HepG2 (cell line): ENCODE measurements at regions of chrX and their contacts with region 1.

Region 1: GRCh38 chrX:13734278-13735172 is at the starts of genes OFD1 and TRAPPC2:
- DNase-seq: peak; percentile 88
- ATAC-seq: peak; percentile 99
- H3K4me3 ChIP-seq: peak within 1 kb of the TSS; percentile 72 to 79 (median 79)
- H3K27ac ChIP-seq: peak within 1 kb of the TSS; percentile 88
- H3K4me1 ChIP-seq: peaks cover 15% of the 10 kb centered on the region
- H3K27me3 ChIP-seq: no peaks in the 10 kb centered on the region; a peak in 1 of 5 replicates
- CTCF ChIP-seq: 0 out of 2 replicates have a peak, but pooled peaks have one; percentile 17
- EP300 ChIP-seq: no peak; a peak in 1 of 4 replicates
- POLR2A ChIP-seq: peak; percentile 77 to 89
- RAD21 ChIP-seq: no peak
- total RNA-seq, gene OFD1: 14.3 and 16.4 TPM in 2 replicates
- total RNA-seq, gene TRAPPC2: 8.1 and 9.2 TPM in 2 replicates

Region 2: DNA sequence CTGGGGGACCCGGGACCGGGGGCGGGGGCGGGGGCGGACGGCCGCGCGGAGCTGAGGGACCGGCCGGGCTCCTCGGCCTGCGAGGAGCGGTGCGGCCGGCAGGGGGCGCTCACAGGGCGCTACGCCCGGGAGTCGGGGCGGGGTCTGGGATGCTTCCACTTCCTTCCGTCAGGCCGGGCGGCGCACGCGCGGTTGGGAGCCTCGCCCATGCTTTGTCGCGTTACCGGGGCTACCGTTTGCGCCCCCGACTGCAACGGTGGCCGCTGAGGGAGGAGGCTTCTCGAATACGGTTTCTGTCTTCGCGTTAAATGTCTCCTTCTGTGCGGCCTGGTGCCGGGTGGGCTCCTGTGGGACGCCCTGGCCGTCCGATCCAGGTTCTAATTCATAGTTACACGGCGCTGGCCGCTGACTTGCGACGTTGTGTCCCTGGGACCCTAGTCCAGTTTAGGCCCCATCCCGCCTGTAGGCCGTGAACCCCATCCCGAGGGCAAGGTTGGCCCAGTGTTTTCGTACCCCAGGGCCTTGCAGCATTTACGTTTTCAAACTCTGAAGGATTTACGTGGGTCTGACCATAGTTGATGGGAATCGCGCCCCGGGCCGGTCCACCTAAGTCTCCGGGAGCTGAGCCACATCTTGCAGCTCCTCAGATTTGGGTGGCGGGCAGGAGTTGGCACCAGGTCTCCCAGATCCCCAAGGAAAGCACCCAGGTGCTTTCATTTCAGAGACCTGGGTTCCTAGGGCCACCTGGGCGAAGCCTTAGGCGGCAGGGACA is 1975.9 kb before region 1 on chrX:
- CTCF ChIA-PET with region 1: no interaction called
- POLR2A ChIA-PET with region 1: no interaction called
- in situ Hi-C with region 1: no loop called
- intact Hi-C with region 1: no loop called
- DNase-seq: peak; percentile 60
- ATAC-seq: peak; percentile 76
- H3K4me3 ChIP-seq: peak overlapping the region; percentile 81 to 85 (median 85)
- H3K27ac ChIP-seq: peak overlapping the region; percentile 68
- H3K4me1 ChIP-seq: peaks cover 29% of the 10 kb centered on the region
- H3K27me3 ChIP-seq: peaks cover 2 to 13% of the 10 kb centered on the region in 2 experiments; a peak in 3 of 5 replicates
- CTCF ChIP-seq: peak; percentile 65
- EP300 ChIP-seq: no peak
- POLR2A ChIP-seq: no peak
- RAD21 ChIP-seq: no peak

Region 3: GRCh38 chrX:13653022-13653693 is 81.4 kb before region 1 on chrX and contains the start of gene TCEANC:
- CTCF ChIA-PET with region 1: no interaction called
- POLR2A ChIA-PET with region 1: interaction called, 11 read pairs
- in situ Hi-C with region 1: no loop called
- intact Hi-C with region 1: no loop called
- DNase-seq: peak; percentile 91
- ATAC-seq: peak; percentile 98
- H3K4me3 ChIP-seq: peak within 1 kb of the TSS; percentile 63 to 74 (median 68)
- H3K27ac ChIP-seq: peak within 1 kb of the TSS; percentile 74
- H3K4me1 ChIP-seq: peaks cover 6% of the 10 kb centered on the region
- H3K27me3 ChIP-seq: no peaks in the 10 kb centered on the region
- CTCF ChIP-seq: no peak
- EP300 ChIP-seq: no peak
- POLR2A ChIP-seq: peak; percentile 48 to 59; a peak in 3 of 4 replicates
- RAD21 ChIP-seq: no peak
- total RNA-seq, gene TCEANC: 0.97 and 1.5 TPM in 2 replicates

Region 4: GRCh38 chrX:13688958-13689740 is 45.4 kb before region 1 on chrX and contains the start of gene RAB9A:
- CTCF ChIA-PET with region 1: no interaction called
- POLR2A ChIA-PET with region 1: interaction called, 11 read pairs
- in situ Hi-C with region 1: no loop called
- intact Hi-C with region 1: loop called (anchors 2 kb)
- DNase-seq: peak; percentile 33
- ATAC-seq: peak; percentile 96
- H3K4me3 ChIP-seq: peak within 1 kb of the TSS; percentile 68 to 88 (median 80)
- H3K27ac ChIP-seq: peak within 1 kb of the TSS; percentile 80
- H3K4me1 ChIP-seq: peaks cover 38% of the 10 kb centered on the region
- H3K27me3 ChIP-seq: no peaks in the 10 kb centered on the region
- CTCF ChIP-seq: no peak
- EP300 ChIP-seq: no peak
- POLR2A ChIP-seq: peak; percentile 54 to 91; a peak in 3 of 4 replicates
- RAD21 ChIP-seq: no peak
- total RNA-seq, gene RAB9A: 23.1 and 31.2 TPM in 2 replicates